ENCODE measurements at regions of chr6 and their contacts with region 1.

Region 1: DNA sequence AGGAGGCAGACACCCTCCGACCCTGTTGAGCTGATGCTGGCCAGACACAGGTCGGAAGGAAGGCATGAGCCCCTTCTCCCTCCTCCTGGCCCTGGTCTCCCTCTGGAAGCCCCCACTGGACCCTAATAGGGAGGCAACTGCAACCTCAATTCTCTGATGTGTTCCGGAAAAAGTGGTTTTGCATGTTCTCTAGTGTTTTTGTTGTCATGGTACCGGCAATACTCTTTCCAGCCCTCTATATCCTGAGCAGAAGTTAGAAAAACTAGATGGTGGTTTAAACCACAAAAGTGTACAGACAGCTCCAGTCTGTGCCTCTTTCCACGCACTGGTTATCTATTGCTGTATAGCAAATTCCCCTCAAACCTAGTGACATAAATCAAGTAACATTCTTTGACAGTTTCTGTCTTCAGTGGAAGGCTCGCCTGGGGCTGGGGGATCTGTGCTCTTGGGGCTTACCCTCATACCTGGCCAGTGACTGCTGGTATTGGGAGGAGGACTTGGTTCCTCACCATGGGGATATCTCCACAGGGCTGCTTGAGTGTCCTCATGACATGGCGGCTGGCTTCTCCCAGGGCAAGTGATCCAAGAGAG is 37.0 kb downstream of the SYTL3 start:
- DNase-seq: no peak
- ATAC-seq: peak; percentile 71
- H3K4me3 ChIP-seq: no peak overlapping the region
- H3K27ac ChIP-seq: no peak overlapping the region
- H3K4me1 ChIP-seq: peaks cover 13% of the 10 kb centered on the region
- H3K27me3 ChIP-seq: no peaks in the 10 kb centered on the region
- CTCF ChIP-seq: no peak
- EP300 ChIP-seq: no peak
- POLR2A ChIP-seq: no peak
- RAD21 ChIP-seq: no peak

Region 2: GRCh38 chr6:158220786-158221442 is 466.0 kb before region 1 on chr6:
- CTCF ChIA-PET with region 1: interaction called, 28 read pairs
- POLR2A ChIA-PET with region 1: interaction called, 4 read pairs
- RAD21 ChIA-PET with region 1: interaction called, 14 read pairs
- SMC1A ChIA-PET with region 1: interaction called, 11 read pairs
- in situ Hi-C with region 1: no loop called
- intact Hi-C with region 1: loop called (anchors 2 kb)
- DNase-seq: no peak
- ATAC-seq: peak; percentile 100
- H3K4me3 ChIP-seq: no peak overlapping the region
- H3K27ac ChIP-seq: no peak overlapping the region
- H3K4me1 ChIP-seq: no peaks in the 10 kb centered on the region
- H3K27me3 ChIP-seq: no peaks in the 10 kb centered on the region
- CTCF ChIP-seq: peak; percentile 85 to 95 (median 93); a peak in 5 of 6 replicates
- EP300 ChIP-seq: no peak
- POLR2A ChIP-seq: no peak
- RAD21 ChIP-seq: peak; percentile 100

Region 3: DNA sequence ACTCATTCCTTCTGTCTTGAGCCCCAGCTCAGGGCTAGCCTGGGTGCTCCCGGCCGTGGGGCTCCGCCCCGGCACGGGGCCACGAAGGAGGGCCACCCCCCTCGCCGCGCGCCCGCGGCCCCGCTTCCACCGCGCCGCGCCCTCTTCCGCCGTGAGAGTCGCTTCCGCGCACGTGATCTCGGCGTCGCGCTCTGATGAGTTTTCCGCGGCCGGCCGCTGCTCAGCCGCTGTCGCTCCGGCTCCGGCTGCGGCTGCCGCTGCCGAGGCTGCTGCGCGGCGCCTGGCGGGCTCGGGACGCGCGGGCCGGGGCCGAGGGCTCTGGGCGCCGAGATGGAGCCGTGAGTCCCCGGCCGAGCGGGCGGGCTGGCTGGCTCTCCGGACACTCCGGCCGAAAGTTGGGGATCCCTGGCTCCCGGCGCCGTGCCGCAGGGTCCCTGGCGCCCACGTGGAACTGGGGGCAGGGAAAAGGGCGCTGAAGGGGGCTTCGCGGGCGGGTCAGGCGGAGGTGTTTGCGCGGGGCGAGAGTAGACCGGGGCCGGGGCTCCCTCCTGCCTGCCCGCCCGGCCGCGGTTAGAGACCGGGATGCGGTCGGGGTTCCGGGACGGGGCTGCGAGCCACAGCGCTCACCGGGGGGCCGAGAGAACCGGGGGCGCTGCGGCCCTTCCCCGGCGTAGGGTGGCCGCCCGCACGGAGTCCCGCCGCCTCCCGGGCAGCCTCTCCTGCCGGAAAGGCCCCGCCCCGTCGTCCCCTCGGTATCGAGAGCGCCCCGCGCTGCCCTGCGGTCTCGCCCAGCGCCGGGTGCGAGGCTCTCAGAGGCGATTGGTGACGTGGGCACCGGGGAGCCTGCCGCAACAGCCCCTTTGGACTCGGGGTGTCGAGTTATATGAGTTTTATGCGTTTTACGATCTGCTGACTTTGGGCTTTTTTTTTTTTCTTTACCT is 126.7 kb before region 1 on chr6 and contains the start of gene TMEM181:
- CTCF ChIA-PET with region 1: interaction called, 11 read pairs
- POLR2A ChIA-PET with region 1: no interaction called
- RAD21 ChIA-PET with region 1: interaction called, 4 read pairs
- SMC1A ChIA-PET with region 1: interaction called, 5 read pairs
- in situ Hi-C with region 1: no loop called
- intact Hi-C with region 1: no loop called
- DNase-seq: peak; percentile 32
- ATAC-seq: peak; percentile 89
- H3K4me3 ChIP-seq: peak within 1 kb of the TSS; percentile 79
- H3K27ac ChIP-seq: peak within 1 kb of the TSS; percentile 69
- H3K4me1 ChIP-seq: peaks cover 12% of the 10 kb centered on the region
- H3K27me3 ChIP-seq: no peaks in the 10 kb centered on the region
- CTCF ChIP-seq: no peak
- EP300 ChIP-seq: no peak
- POLR2A ChIP-seq: peak; percentile 88
- RAD21 ChIP-seq: no peak
- polyA plus RNA-seq, gene TMEM181: 1.5 to 2.3 TPM

Region 4: DNA sequence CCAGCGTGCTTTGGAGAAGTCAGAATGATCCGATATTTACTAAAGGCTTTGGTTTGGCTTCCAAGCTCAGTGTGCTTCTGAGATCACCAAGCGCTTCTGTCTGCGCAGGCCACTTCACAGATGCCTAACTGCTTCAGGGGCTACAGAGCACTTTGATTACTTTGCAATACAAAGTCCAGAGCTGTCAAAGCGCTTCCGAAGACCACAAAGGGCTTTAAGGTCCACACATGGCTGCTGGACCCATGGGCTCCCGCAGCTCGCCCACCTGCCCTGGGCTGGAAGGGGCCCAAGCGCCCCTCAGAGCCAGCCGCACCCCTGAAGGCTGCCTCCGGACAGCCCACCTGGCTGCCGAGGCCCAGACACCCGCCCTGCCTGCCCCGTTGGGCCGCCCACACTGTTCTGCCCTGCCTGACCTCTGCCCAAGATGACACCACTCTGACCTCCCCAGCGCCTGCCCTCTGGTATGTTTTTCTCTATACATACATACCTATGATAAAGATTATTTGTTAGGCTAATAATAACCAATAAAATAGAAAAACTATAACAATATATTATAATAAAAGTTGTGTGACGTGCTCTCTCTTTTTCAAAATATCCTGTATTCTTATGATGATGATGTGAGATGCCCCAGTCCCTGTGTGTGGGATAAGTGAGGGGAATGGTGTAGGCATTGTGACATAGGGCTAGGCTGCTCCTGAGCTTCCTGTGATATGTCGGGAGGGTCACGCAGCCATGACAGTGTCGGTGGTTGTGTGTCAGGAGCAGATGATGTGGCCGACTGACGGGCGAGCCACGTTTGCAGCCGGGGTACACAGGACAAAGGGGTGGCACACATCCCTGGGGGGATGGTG is 65.0 kb before region 1 on chr6:
- CTCF ChIA-PET with region 1: interaction called, 15 read pairs
- POLR2A ChIA-PET with region 1: no interaction called
- RAD21 ChIA-PET with region 1: interaction called, 3 read pairs
- SMC1A ChIA-PET with region 1: interaction called, 5 read pairs
- in situ Hi-C with region 1: no loop called
- intact Hi-C with region 1: no loop called
- DNase-seq: no peak
- ATAC-seq: no peak
- H3K4me3 ChIP-seq: no peak overlapping the region
- H3K27ac ChIP-seq: no peak overlapping the region
- H3K4me1 ChIP-seq: no peaks in the 10 kb centered on the region; the same call in 1 of the 2 replicates
- H3K27me3 ChIP-seq: no peaks in the 10 kb centered on the region
- CTCF ChIP-seq: no peak
- EP300 ChIP-seq: no peak
- POLR2A ChIP-seq: no peak
- RAD21 ChIP-seq: no peak

Region 5: GRCh38 chr6:158644231-158645063 is 42.4 kb before region 1 on chr6 and contains the start of gene DYNLT1:
- CTCF ChIA-PET with region 1: interaction called, 72 read pairs
- POLR2A ChIA-PET with region 1: interaction called, 5 read pairs
- RAD21 ChIA-PET with region 1: interaction called, 28 read pairs
- SMC1A ChIA-PET with region 1: interaction called, 27 read pairs
- in situ Hi-C with region 1: no loop called
- intact Hi-C with region 1: loop called (anchors 5 kb)
- DNase-seq: peak; percentile 71
- ATAC-seq: peak; percentile 71
- H3K4me3 ChIP-seq: peak within 1 kb of the TSS; percentile 81
- H3K27ac ChIP-seq: peak within 1 kb of the TSS; percentile 82
- H3K4me1 ChIP-seq: peaks cover 26% of the 10 kb centered on the region
- H3K27me3 ChIP-seq: no peaks in the 10 kb centered on the region
- CTCF ChIP-seq: no peak
- EP300 ChIP-seq: no peak
- POLR2A ChIP-seq: peak; percentile 97
- RAD21 ChIP-seq: no peak
- polyA plus RNA-seq, gene DYNLT1: 246 to 298 TPM

Region 6: GRCh38 chr6:158660333-158660754 is 26.5 kb before region 1 on chr6:
- CTCF ChIA-PET with region 1: interaction called, 140 read pairs
- POLR2A ChIA-PET with region 1: interaction called, 4 read pairs
- RAD21 ChIA-PET with region 1: interaction called, 61 read pairs
- SMC1A ChIA-PET with region 1: interaction called, 83 read pairs
- in situ Hi-C with region 1: no loop called
- intact Hi-C with region 1: loop called (anchors 1 kb)
- DNase-seq: no peak
- ATAC-seq: peak; percentile 76
- H3K4me3 ChIP-seq: no peak overlapping the region
- H3K27ac ChIP-seq: no peak overlapping the region
- H3K4me1 ChIP-seq: peaks cover 9% of the 10 kb centered on the region
- H3K27me3 ChIP-seq: no peaks in the 10 kb centered on the region
- CTCF ChIP-seq: peak; percentile 57 to 70 (median 62)
- EP300 ChIP-seq: no peak
- POLR2A ChIP-seq: no peak
- RAD21 ChIP-seq: peak; percentile 59

Region 7: DNA sequence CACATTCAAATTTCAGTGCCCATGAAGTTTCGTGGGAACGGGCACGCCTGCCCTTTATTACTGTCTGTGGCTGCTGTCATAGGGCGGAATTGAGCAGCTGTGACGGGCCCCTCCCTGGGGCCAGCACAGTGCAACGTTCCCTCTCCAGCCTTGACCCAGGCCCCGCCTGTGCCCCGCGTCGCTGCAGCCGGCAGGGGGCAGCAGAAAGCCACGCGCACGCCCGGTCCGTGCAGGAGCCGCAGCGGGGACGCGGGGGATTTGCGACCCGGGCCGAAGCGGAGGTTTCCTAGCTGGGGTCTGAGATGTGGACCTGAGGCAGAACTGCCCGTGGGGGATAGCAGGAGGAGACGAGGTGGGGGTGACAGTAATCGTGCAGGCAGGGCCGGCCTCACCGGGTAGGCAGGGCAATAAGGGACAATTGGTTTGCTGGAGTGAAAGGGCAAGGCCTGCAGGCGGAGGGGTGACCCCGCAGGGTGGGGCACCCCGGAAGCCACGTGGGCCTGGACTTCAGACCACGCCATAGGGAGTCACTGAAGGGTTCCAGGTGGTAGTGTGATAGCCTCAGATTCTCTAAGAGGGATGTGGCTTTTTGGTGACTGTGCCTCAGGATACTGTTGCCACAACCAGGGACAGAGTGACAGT is 17.4 kb after region 1 on chr6:
- CTCF ChIA-PET with region 1: interaction called, 13 read pairs
- POLR2A ChIA-PET with region 1: interaction called, 5 read pairs
- RAD21 ChIA-PET with region 1: interaction called, 9 read pairs
- SMC1A ChIA-PET with region 1: interaction called, 4 read pairs
- in situ Hi-C with region 1: no loop called
- intact Hi-C with region 1: no loop called
- DNase-seq: no peak
- ATAC-seq: peak; percentile 99
- H3K4me3 ChIP-seq: peak overlapping the region; percentile 45; the same call in 1 of the 2 replicates
- H3K27ac ChIP-seq: no peak overlapping the region
- H3K4me1 ChIP-seq: peaks cover 9% of the 10 kb centered on the region
- H3K27me3 ChIP-seq: no peaks in the 10 kb centered on the region
- CTCF ChIP-seq: peak; percentile 97 to 99 (median 98); a peak in 5 of 6 replicates
- EP300 ChIP-seq: no peak
- POLR2A ChIP-seq: no peak
- RAD21 ChIP-seq: peak; percentile 97

Measured in GM12878 (cell line).